Activated CD4-positive, alpha-beta memory T cell treated with anti-CD3 and anti-CD28 coated beads for 36 hours (primary cell): ENCODE measurements at regions of chr4 and their contacts with region 1.

Region 1: DNA sequence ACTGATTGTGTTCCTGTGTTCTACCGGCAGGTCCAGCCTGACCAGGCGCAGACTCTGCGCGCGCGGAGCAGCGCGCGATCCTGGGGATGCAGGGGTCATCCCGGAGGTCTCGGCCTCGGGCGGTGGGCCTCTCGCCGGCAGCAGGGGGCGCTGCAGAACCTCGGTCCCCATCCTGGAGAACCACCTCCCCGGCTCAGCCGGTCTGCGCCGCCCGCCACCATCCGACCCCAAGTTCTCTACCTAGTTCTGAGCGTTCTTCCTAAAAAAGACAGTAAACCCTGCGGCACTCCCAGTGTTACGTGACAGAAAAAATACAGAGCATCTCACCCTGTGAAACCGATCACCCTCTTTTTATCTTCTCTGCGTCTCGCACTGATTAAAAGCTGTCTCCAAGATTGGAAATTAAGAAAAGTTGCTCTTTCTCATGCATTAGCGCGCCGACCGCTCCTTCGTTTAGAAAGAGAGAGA is 1.6 kb downstream of the TRPC3 start:
- DNase-seq: peak; percentile 91
- H3K4me3 Mint-ChIP-seq: peak overlapping the region; percentile 89
- H3K27ac Mint-ChIP-seq: peak overlapping the region; percentile 19
- H3K4me1 Mint-ChIP-seq: peaks cover 9% of the 10 kb centered on the region
- H3K27me3 Mint-ChIP-seq: peaks cover 15% of the 10 kb centered on the region

Region 2: GRCh38 chr4:121307445-121308327 is 642.6 kb before region 1 on chr4:
- CTCF ChIA-PET with region 1: no interaction called
- POLR2A ChIA-PET with region 1: no interaction called
- intact Hi-C with region 1: no loop called
- DNase-seq: peak; percentile 58
- H3K4me3 Mint-ChIP-seq: peak overlapping the region; percentile 7
- H3K27ac Mint-ChIP-seq: peak overlapping the region; percentile 75
- H3K4me1 Mint-ChIP-seq: peaks cover 18% of the 10 kb centered on the region
- H3K27me3 Mint-ChIP-seq: no peaks in the 10 kb centered on the region

Region 3: GRCh38 chr4:122003335-122003734 is 53.1 kb after region 1 on chr4:
- CTCF ChIA-PET with region 1: interaction called, 10 read pairs
- POLR2A ChIA-PET with region 1: no interaction called
- intact Hi-C with region 1: loop called (anchors 1 kb)
- DNase-seq: peak; percentile 28
- H3K4me3 Mint-ChIP-seq: no peak overlapping the region
- H3K27ac Mint-ChIP-seq: no peak overlapping the region
- H3K4me1 Mint-ChIP-seq: no peaks in the 10 kb centered on the region
- H3K27me3 Mint-ChIP-seq: peaks cover 7% of the 10 kb centered on the region

Region 4: GRCh38 chr4:122224348-122224747 is 274.1 kb after region 1 on chr4:
- CTCF ChIA-PET with region 1: interaction called, 5 read pairs
- POLR2A ChIA-PET with region 1: no interaction called
- intact Hi-C with region 1: loop called (anchors 1 kb)
- DNase-seq: peak; percentile 14
- H3K4me3 Mint-ChIP-seq: no peak overlapping the region
- H3K27ac Mint-ChIP-seq: no peak overlapping the region
- H3K4me1 Mint-ChIP-seq: peaks cover 16% of the 10 kb centered on the region
- H3K27me3 Mint-ChIP-seq: no peaks in the 10 kb centered on the region

Region 5: GRCh38 chr4:122309988-122310626 is 359.9 kb after region 1 on chr4:
- CTCF ChIA-PET with region 1: no interaction called
- POLR2A ChIA-PET with region 1: no interaction called
- intact Hi-C with region 1: loop called (anchors 10 kb)
- DNase-seq: no peak
- H3K4me3 Mint-ChIP-seq: no peak overlapping the region
- H3K27ac Mint-ChIP-seq: no peak overlapping the region
- H3K4me1 Mint-ChIP-seq: peaks cover 5% of the 10 kb centered on the region
- H3K27me3 Mint-ChIP-seq: no peaks in the 10 kb centered on the region

Region 6: GRCh38 chr4:122716825-122717448 is 766.7 kb after region 1 on chr4:
- CTCF ChIA-PET with region 1: no interaction called
- POLR2A ChIA-PET with region 1: no interaction called
- intact Hi-C with region 1: loop called (anchors 5 kb)
- DNase-seq: peak; percentile 85
- H3K4me3 Mint-ChIP-seq: peak overlapping the region; percentile 37
- H3K27ac Mint-ChIP-seq: peak overlapping the region; percentile 23
- H3K4me1 Mint-ChIP-seq: peaks cover 36% of the 10 kb centered on the region
- H3K27me3 Mint-ChIP-seq: peaks cover 2% of the 10 kb centered on the region